ENCODE measurements at regions of chr1 and their contacts with region 1.

Region 1: GRCh38 chr1:160261893-160262794 is at the start of gene DCAF8:
- DNase-seq: peak; percentile 97
- ATAC-seq: peak; percentile 97
- H3K4me3 ChIP-seq: peak within 1 kb of the TSS; percentile 71
- H3K27ac ChIP-seq: peak within 1 kb of the TSS; percentile 91
- H3K4me1 ChIP-seq: peaks cover 2% of the 10 kb centered on the region; the same call in 1 of the 2 replicates
- H3K27me3 ChIP-seq: no peaks in the 10 kb centered on the region
- CTCF ChIP-seq: 0 out of 2 replicates have a peak, but pooled peaks have one; percentile 1
- POLR2A ChIP-seq: peak; percentile 97
- RAD21 ChIP-seq: no peak
- total RNA-seq, gene DCAF8: 83.3 TPM in 2 replicates

Region 2: DNA sequence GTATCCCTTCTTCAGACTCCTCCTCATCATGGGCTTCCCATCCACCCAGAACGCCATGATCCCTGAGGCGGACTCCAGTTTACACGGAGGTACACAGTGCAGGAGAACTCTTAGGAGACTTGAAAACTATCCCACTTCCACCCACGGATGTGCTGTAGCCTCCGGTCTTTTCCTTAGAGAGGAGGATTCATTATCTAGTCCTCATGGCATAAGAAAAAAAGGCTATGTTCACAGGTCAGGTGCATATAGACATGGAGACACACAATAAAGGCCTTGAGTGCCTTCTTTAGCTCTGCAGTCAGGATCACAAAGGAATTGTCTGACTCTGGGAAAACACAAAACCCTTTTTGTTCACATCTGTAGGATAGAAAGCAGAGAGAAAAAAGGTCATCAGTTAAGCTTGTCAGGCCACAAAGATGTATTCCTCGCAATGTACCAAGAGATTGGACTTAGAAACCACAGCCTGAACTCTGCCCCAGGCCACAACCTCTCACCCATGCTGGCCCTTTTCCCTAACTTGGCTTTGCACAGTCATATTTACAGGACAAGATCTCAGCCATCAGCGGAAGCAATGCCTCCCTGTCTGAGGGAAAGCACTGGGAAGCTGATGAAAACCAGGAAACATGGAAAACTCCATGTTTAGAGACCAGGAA is 556.8 kb before region 1 on chr1:
- CTCF ChIA-PET with region 1: no interaction called
- POLR2A ChIA-PET with region 1: no interaction called
- dilution Hi-C with region 1: no loop called
- in situ Hi-C with region 1: no loop called
- intact Hi-C with region 1: no loop called
- DNase-seq: no peak
- ATAC-seq: no peak
- H3K4me3 ChIP-seq: no peak overlapping the region
- H3K27ac ChIP-seq: no peak overlapping the region
- H3K4me1 ChIP-seq: no peaks in the 10 kb centered on the region
- H3K27me3 ChIP-seq: no peaks in the 10 kb centered on the region; the same call in 1 of the 2 replicates
- CTCF ChIP-seq: no peak
- POLR2A ChIP-seq: no peak
- RAD21 ChIP-seq: no peak

Region 3: GRCh38 chr1:160284782-160285344 is 22.7 kb after region 1 on chr1 and contains the start of gene PEX19:
- CTCF ChIA-PET with region 1: interaction called, 3 read pairs
- POLR2A ChIA-PET with region 1: no interaction called
- dilution Hi-C with region 1: no loop called
- in situ Hi-C with region 1: no loop called
- intact Hi-C with region 1: loop called (anchors 1 kb)
- DNase-seq: peak; percentile 94
- ATAC-seq: peak; percentile 99
- H3K4me3 ChIP-seq: peak within 1 kb of the TSS; percentile 59
- H3K27ac ChIP-seq: peak within 1 kb of the TSS; percentile 68
- H3K4me1 ChIP-seq: peaks cover 3% of the 10 kb centered on the region; the same call in 1 of the 2 replicates
- H3K27me3 ChIP-seq: no peaks in the 10 kb centered on the region
- CTCF ChIP-seq: no peak
- POLR2A ChIP-seq: 0 out of 2 replicates have a peak, but pooled peaks have one; percentile 31
- RAD21 ChIP-seq: no peak
- total RNA-seq, gene PEX19: 43.3 and 67.7 TPM in 2 replicates

Region 4: GRCh38 chr1:160354388-160354985 is 92.3 kb after region 1 on chr1:
- CTCF ChIA-PET with region 1: no interaction called
- POLR2A ChIA-PET with region 1: no interaction called
- dilution Hi-C with region 1: no loop called
- in situ Hi-C with region 1: no loop called
- intact Hi-C with region 1: no loop called
- DNase-seq: peak; percentile 18
- ATAC-seq: peak; percentile 44; the same call in 1 of the 2 replicates
- H3K4me3 ChIP-seq: no peak overlapping the region
- H3K27ac ChIP-seq: no peak overlapping the region
- H3K4me1 ChIP-seq: no peaks in the 10 kb centered on the region
- H3K27me3 ChIP-seq: no peaks in the 10 kb centered on the region
- CTCF ChIP-seq: peak; percentile 45; the same call in 1 of the 2 replicates
- POLR2A ChIP-seq: no peak
- RAD21 ChIP-seq: peak; percentile 29

Measured in IMR-90 (cell line).